ENCODE measurements at regions of chr20 and their contacts with region 1.

Region 1: DNA sequence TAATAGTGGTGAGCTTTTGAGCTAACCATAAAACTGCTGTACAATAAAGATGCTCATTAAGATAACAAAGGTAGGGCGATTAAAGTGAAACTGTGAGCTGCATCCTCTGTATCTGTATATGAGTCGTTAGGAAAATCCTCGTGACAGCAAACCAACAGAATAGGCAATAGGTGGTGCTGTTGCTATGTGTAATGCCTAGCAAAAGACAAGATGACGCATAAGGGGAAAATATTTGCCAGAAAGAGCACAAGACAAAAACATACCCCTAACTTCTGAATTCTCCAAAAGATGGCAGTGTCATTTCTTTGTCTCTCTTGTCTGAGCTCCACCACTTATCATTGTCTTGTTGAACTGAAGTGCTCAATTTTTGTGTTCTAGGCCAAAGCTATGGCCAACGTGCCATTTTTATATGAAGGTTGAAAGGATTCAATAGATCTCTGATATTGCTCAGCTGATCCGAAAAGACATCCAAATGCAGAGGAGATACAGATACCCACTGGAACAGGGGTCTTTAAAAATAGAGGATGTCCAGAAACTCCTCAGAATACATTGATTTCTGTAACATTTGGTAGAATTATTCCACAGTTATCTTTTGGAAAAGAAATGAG is 56.3 kb upstream of the ANKEF1 start:
- DNase-seq: peak; percentile 87
- H3K4me3 ChIP-seq: no peak overlapping the region
- H3K27ac ChIP-seq: no peak overlapping the region
- H3K4me1 ChIP-seq: peaks cover 8% of the 10 kb centered on the region
- H3K27me3 ChIP-seq: peaks cover 1 to 6% of the 10 kb centered on the region in 2 experiments
- CTCF ChIP-seq: peak; percentile 65 to 68
- POLR2A ChIP-seq: no peak

Region 2: GRCh38 chr20:8749986-8750385 is 1228.5 kb before region 1 on chr20:
- CTCF ChIA-PET with region 1: no interaction called
- POLR2A ChIA-PET with region 1: no interaction called
- dilution Hi-C with region 1: no loop called
- intact Hi-C with region 1: no loop called
- DNase-seq: no peak
- H3K4me3 ChIP-seq: no peak overlapping the region
- H3K27ac ChIP-seq: no peak overlapping the region
- H3K4me1 ChIP-seq: no peaks in the 10 kb centered on the region
- H3K27me3 ChIP-seq: no peaks in the 10 kb centered on the region
- CTCF ChIP-seq: no peak
- POLR2A ChIP-seq: no peak

Region 3: GRCh38 chr20:10074513-10074912 is 96.0 kb after region 1 on chr20:
- CTCF ChIA-PET with region 1: interaction called, 40 read pairs
- POLR2A ChIA-PET with region 1: no interaction called
- dilution Hi-C with region 1: no loop called
- intact Hi-C with region 1: no loop called
- DNase-seq: peak; percentile 76
- H3K4me3 ChIP-seq: no peak overlapping the region
- H3K27ac ChIP-seq: peak overlapping the region; percentile 50
- H3K4me1 ChIP-seq: peaks cover 43% of the 10 kb centered on the region
- H3K27me3 ChIP-seq: no peaks in the 10 kb centered on the region
- CTCF ChIP-seq: no peak
- POLR2A ChIP-seq: no peak

Region 4: GRCh38 chr20:10316582-10316981 is 338.1 kb after region 1 on chr20:
- CTCF ChIA-PET with region 1: interaction called, 7 read pairs
- POLR2A ChIA-PET with region 1: no interaction called
- dilution Hi-C with region 1: no loop called
- intact Hi-C with region 1: loop called (anchors 1 kb)
- DNase-seq: peak; percentile 35
- H3K4me3 ChIP-seq: no peak overlapping the region
- H3K27ac ChIP-seq: no peak overlapping the region
- H3K4me1 ChIP-seq: no peaks in the 10 kb centered on the region
- H3K27me3 ChIP-seq: no peaks in the 10 kb centered on the region
- CTCF ChIP-seq: peak; percentile 14 to 37
- POLR2A ChIP-seq: no peak

Region 5: DNA sequence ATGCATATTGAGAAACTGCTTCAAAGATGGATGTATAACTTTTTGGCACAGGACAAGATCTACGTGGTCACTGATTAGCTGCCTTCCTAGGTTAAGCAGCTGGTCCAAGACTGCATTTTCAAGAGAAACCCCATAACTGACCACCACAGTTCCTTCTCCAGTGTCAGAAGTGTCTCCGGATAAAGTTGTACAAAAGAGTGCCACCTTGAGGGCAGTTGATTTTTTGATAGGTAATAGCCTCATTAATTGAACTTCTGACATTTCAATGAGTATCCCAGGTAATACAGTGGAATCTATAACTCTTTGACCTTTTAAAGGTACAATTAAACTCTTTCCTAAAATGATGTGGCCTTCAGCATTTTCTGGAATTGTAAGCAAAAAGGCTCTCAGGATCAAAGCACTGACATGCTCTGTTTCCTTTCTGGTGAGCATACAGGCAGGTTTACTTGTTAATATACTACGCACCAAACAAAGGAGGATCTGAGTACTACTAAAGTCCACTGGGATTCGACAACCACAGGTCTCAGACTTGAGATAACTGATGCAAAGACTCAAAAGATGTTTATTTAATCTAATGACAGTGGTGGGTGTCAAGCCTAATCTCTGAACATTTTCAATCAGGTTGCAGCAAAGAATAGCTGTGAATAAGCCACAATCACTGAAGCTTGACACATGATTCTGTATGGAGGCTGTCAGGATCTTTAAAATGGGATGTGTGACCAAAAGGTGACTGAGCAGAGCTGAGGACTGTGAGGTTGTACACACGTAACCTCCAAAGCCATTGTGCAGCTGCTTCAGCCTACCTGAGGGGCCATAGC is 434.3 kb after region 1 on chr20:
- CTCF ChIA-PET with region 1: interaction called, 11 read pairs
- POLR2A ChIA-PET with region 1: no interaction called
- dilution Hi-C with region 1: no loop called
- intact Hi-C with region 1: no loop called
- DNase-seq: peak; percentile 37
- H3K4me3 ChIP-seq: no peak overlapping the region
- H3K27ac ChIP-seq: no peak overlapping the region
- H3K4me1 ChIP-seq: peaks cover 20% of the 10 kb centered on the region
- H3K27me3 ChIP-seq: no peaks in the 10 kb centered on the region
- CTCF ChIP-seq: peak in 1 of 2 donors; percentile 7
- POLR2A ChIP-seq: no peak

Region 6: DNA sequence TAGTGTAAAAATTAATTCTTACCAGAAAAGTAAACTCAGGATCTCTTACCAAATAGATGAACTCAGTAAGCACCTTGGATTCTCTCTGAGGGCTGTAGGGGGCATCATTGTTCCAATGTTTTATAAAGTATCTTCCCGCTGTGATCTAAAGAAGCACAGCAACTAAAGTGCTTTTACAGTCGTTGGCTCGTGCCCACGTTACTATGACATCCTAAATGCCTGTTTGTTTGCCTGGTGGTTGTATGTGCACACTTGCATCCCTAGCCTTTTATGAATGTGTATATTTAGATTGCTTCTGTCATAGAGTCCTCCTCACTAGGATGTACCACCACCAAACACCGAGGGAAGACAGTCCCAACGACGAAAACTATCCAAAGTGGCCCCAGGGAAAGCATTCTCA is 491.1 kb after region 1 on chr20:
- CTCF ChIA-PET with region 1: interaction called, 13 read pairs
- POLR2A ChIA-PET with region 1: no interaction called
- dilution Hi-C with region 1: no loop called
- intact Hi-C with region 1: no loop called
- DNase-seq: peak; percentile 90
- H3K4me3 ChIP-seq: no peak overlapping the region
- H3K27ac ChIP-seq: peak overlapping the region; percentile 9
- H3K4me1 ChIP-seq: peaks cover 40% of the 10 kb centered on the region
- H3K27me3 ChIP-seq: no peaks in the 10 kb centered on the region
- CTCF ChIP-seq: peak; percentile 49 to 50
- POLR2A ChIP-seq: no peak

Region 7: DNA sequence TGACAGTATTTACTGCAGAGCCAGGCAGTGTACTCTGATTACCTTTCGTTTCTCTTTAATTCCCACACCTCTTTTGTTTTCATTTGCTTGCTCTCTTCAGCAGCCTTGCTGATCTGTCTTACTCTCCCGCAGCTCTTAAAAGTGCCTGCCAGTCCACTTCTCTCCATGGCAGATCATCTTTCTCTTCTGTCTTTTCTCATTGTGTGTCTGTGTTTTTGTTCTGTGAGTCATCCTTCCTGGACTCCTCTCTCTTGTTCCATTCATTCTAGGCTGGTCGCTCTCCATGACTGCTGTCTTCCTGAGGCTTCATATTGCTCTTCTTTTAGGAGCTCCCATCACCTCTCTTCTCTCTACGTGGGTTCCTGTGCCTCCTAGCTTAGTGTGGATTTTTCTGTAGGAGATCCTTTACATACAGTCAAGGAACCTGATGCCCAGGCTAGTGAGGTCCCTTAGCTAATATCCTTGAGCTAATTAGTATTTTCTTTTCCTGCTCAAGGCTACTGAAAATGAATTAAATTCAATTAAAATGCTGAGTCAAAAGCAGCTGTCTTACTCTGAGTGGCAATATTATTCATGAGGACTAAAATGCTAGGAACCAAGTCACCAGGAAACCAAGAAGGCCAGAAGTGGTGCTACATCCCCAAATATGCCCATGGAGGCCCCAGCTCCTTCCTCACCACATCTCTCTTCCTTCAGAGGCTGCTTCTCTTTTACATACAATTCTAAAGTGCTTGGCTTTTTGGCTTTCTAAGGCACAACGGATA is 542.7 kb after region 1 on chr20:
- CTCF ChIA-PET with region 1: no interaction called
- POLR2A ChIA-PET with region 1: no interaction called
- dilution Hi-C with region 1: no loop called
- intact Hi-C with region 1: no loop called
- DNase-seq: peak; percentile 77
- H3K4me3 ChIP-seq: no peak overlapping the region
- H3K27ac ChIP-seq: peak overlapping the region; percentile 8
- H3K4me1 ChIP-seq: peaks cover 28% of the 10 kb centered on the region
- H3K27me3 ChIP-seq: no peaks in the 10 kb centered on the region
- CTCF ChIP-seq: no peak
- POLR2A ChIP-seq: no peak

Region 8: DNA sequence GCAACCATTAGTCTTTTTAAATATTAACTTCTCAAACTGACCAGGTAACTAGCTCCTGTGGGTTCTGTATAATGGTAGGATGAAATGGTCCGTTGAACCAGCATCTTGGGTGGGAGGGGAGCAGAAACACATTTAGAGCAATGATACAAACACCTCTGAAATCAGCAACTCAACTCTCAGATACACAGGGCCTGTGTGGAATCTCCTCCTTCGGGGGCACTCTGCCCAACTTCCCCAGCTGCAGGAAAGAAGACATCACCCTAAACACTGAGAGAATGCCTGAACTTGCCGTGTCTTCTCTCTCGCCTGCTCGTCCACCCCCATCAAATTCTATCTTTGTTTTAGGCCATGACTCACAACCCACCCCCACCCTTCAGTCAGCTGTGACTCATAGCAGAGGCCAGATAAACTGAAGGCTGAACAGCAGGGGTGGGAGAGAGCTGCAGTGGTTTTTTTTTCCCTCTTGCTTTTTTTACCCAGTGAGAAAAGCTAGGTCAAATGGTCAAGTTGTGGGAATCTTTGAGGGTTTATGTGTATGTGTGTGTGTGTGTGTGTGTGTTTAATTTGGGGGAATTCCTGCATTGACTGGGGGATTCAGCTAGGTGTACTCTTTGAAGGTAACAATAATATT is 1288.7 kb after region 1 on chr20:
- CTCF ChIA-PET with region 1: no interaction called
- POLR2A ChIA-PET with region 1: no interaction called
- dilution Hi-C with region 1: no loop called
- intact Hi-C with region 1: loop called (anchors 2 kb)
- DNase-seq: peak; percentile 94
- H3K4me3 ChIP-seq: no peak overlapping the region
- H3K27ac ChIP-seq: peak overlapping the region; percentile 56
- H3K4me1 ChIP-seq: peaks cover 23% of the 10 kb centered on the region
- H3K27me3 ChIP-seq: no peaks in the 10 kb centered on the region
- CTCF ChIP-seq: peak in 1 of 2 donors; percentile 13
- POLR2A ChIP-seq: no peak

Measured in endothelial cell of umbilical vein (primary cell).